Activated T-helper 2 cell treated with anti-CD3 and anti-CD28 coated beads, Interferon-gamma antibody, Interleukin-2, Interleukin-4, amounts not matched to agents 10 μg/mL and 5 μg/mL and 100 μg/mL, durations not matched to agents 14 hours and 24 hours and 36 hours (primary cell): ENCODE measurements at regions of chr11 and their contacts with region 1.

Region 1: DNA sequence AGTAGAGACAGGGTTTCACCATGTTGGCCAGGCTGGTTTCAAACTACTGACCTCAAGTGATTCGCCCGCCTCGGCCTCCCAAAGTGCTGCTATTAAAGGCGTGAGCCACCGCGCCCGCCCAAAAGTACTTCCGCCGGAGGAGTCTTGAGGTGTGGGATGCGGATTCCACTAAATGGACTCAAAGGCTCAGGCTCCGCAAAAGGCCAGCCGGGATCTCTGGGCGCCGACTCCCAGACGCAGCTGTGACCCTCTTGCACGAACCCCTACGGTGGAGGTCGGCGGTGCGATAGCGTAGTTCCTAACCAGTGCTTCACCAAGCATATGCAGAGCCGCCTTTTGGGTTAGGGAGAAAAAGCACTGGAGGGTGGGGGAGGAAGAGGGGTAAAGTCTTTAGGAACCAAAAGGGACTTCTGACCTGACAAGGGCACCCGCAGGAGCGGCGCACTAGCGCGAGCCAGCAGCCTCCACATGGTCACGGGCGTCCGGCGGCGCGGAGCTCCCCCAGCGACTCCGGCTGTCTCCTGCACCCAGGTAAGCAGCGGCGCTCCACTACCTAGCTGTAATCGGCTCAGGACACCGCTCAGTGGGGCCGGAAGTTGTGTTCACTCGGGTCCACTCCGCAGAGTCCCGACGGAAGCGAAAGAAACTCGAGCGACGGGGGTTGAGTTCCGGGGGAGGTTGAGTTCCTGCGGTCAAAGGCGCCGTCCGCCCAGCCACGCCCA is at the start of gene MRPL16:
- DNase-seq: peak; percentile 85
- H3K4me3 Mint-ChIP-seq: peak within 1 kb of the TSS; percentile 94
- H3K27ac Mint-ChIP-seq: peak within 1 kb of the TSS; percentile 84
- H3K4me1 Mint-ChIP-seq: peaks cover 22% of the 10 kb centered on the region
- H3K27me3 Mint-ChIP-seq: no peaks in the 10 kb centered on the region
- total RNA-seq, gene MRPL16: 87.7 and 90.4 TPM in 2 replicates

Region 2: DNA sequence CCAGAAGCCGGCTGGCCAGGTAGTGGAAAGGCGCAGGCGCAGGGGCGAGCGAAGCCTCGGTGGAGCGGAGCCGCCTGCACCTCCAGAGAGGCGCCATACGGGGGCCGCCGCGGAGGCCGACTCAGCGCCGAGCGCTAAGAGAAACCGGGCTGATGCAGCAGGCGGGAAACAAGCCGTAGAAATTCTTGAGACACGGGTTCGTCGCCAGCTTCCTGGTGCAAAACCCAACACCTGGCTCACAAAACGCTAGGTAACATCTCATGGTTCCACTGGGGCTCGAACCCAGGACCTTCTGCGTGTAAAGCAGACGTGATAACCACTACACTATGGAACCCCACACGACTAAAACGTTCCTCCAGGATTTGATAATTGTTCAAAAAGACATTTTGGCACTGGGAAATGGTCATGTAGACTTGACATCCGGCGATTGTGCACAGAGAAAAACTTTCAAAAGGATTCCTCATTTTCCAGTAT is 259.9 kb before region 1 on chr11:
- intact Hi-C with region 1: loop called (anchors 2 kb)
- DNase-seq: peak; percentile 84
- H3K4me3 Mint-ChIP-seq: peak overlapping the region; percentile 89
- H3K27ac Mint-ChIP-seq: peak overlapping the region; percentile 94
- H3K4me1 Mint-ChIP-seq: peaks cover 24% of the 10 kb centered on the region
- H3K27me3 Mint-ChIP-seq: peaks cover 4% of the 10 kb centered on the region

Region 3: GRCh38 chr11:59857444-59858434 is 47.4 kb after region 1 on chr11:
- intact Hi-C with region 1: loop called (anchors 2 kb)
- DNase-seq: peak; percentile 11
- H3K4me3 Mint-ChIP-seq: peak overlapping the region; percentile 19
- H3K27ac Mint-ChIP-seq: peak overlapping the region; percentile 95
- H3K4me1 Mint-ChIP-seq: peaks cover 41% of the 10 kb centered on the region
- H3K27me3 Mint-ChIP-seq: no peaks in the 10 kb centered on the region